ENCODE measurements at regions of chr5 and their contacts with region 1.

Region 1: GRCh38 chr5:36060420-36060887 is 6.2 kb downstream of the UGT3A2 start:
- DNase-seq: peak; percentile 55
- ATAC-seq: peak; percentile 82
- H3K4me3 ChIP-seq: peak overlapping the region; percentile 15; the same call in 1 of the 2 replicates
- H3K27ac ChIP-seq: no peak overlapping the region
- H3K4me1 ChIP-seq: peaks cover 9% of the 10 kb centered on the region
- H3K27me3 ChIP-seq: peaks cover 17% of the 10 kb centered on the region
- CTCF ChIP-seq: peak; percentile 71

Region 2: DNA sequence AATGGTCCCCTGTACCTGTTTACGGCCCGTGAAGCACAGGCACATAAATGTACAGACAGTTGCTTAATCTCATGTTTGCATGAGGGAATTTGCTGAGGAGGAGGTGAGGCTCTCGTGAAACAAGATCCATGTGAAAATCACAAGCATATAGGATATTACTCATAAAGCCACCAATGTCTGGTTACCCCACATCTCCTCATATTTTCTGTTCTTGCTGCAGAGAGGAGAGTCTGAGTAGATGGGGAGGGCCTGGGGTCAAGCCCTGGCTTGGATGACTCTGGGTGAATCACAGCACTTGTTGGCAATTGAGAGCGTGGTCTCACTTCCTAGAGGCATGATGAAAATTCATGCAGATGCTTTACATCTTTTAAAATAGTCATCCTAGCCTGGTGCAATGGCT is 1013.7 kb before region 1 on chr5:
- CTCF ChIA-PET with region 1: no interaction called
- POLR2A ChIA-PET with region 1: interaction called, 20 read pairs
- intact Hi-C with region 1: no loop called
- DNase-seq: peak; percentile 94
- ATAC-seq: peak; percentile 94
- H3K4me3 ChIP-seq: no peak overlapping the region
- H3K27ac ChIP-seq: peak overlapping the region; percentile 11; the same call in 1 of the 2 replicates
- H3K4me1 ChIP-seq: peaks cover 14% of the 10 kb centered on the region
- H3K27me3 ChIP-seq: peaks cover 43% of the 10 kb centered on the region
- CTCF ChIP-seq: no peak

Region 3: DNA sequence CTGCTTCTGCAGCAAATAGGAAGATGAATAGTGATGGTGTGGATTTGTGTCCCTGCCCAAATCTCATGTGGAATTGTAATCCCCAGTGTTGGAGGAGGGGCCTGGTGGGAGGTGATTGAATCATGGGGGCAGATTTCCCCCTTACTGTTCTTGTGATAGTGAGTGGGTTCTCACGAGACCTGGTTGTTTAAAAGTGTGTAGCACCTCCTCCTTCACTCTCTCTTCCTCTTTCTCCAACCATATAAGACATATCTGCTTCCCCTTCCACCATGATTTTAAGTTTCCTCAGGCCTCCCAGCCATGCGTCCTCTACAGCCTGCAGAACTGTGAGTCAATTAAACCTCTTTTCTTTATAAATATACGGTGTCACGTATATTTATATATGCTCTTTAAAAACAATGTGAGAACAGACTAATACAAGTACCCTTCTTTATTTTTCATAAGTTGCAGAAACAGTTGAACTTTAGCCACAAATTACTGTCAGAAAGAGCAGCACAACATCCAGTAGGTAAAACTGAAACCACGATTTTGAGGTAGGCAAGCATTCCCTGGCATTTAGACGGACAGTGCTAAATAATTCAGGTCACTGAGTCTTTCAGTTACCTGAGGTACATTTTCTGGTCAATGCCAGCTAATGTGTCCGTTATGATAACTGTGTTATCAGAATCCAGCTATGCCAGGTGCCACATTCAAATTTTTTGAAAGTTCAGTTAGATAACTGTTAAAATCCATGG is 522.1 kb before region 1 on chr5:
- CTCF ChIA-PET with region 1: no interaction called
- POLR2A ChIA-PET with region 1: no interaction called
- intact Hi-C with region 1: no loop called
- DNase-seq: no peak
- ATAC-seq: no peak
- H3K4me3 ChIP-seq: no peak overlapping the region
- H3K27ac ChIP-seq: no peak overlapping the region
- H3K4me1 ChIP-seq: no peaks in the 10 kb centered on the region
- H3K27me3 ChIP-seq: peaks cover 48% of the 10 kb centered on the region
- CTCF ChIP-seq: no peak

Region 4: DNA sequence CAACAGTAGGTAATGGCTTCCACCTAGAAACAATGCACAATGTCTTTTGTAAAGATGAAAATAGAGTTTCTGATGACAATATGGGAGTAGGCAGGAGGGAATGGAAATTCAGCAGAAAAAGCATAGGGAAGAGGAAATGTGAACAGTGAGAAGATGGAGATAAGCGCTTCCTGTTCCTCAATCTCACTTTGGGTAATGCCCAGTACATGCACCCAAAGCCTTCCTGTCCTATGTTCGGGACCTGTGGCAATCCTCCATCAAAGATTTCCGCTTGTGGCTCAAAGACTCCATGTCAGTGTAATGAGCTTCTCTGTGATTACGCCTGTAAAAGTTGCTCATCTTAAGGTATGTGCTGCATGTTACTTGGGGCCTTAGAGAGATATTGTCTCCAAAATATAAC is 71.9 kb before region 1 on chr5:
- CTCF ChIA-PET with region 1: no interaction called
- POLR2A ChIA-PET with region 1: no interaction called
- intact Hi-C with region 1: loop called (anchors 2 kb)
- DNase-seq: no peak
- ATAC-seq: no peak
- H3K4me3 ChIP-seq: no peak overlapping the region
- H3K27ac ChIP-seq: no peak overlapping the region
- H3K4me1 ChIP-seq: no peaks in the 10 kb centered on the region
- H3K27me3 ChIP-seq: peaks cover 81% of the 10 kb centered on the region
- CTCF ChIP-seq: no peak

Region 5: DNA sequence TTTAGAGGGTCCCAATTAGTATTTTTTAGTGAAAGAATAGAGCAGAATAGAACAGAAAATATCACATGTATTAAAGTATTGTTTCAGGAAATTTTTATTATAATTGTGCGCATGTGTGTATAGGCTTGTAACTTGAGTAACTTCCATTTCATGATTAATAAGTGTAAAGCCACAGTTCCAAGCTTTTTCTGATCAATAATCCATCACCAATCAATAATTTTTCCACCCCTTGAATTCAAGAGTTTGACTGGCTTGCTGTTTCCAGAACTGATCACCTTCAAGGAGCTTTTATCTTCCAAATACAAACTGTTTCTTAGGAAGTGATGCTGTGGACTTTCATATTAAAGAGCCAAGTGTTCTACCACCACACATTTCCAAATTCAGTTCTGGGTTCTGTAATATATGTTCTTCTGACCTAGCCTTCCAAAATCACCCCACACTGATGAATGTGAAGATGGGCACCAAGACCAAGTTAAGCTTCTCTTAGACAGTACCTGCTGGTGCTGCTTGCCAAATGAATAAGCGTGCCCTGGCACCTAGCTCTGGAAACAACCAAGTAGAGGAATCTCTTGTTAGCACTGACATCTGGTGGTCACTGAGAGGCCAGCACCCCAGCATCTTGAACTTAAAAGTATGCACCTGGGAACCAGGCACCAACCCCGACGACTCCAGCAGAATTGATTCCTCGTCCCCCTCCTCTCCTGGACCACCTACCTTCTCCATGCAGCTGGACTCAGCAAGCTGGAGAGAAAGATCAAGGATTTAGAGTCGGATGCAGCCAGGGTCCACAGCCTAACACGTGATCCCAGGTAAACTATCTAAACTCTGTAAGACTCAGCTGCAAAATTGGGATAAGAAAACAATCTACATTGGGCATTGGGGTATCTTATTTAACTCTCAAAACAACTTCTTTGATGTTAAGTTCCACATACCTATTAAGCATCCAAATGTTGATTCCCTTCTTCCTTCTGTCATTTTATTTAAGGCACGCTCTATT is 635.5 kb after region 1 on chr5:
- CTCF ChIA-PET with region 1: no interaction called
- POLR2A ChIA-PET with region 1: no interaction called
- intact Hi-C with region 1: loop called (anchors 5 kb)
- DNase-seq: peak; percentile 86
- ATAC-seq: peak; percentile 78
- H3K4me3 ChIP-seq: no peak overlapping the region
- H3K27ac ChIP-seq: no peak overlapping the region
- H3K4me1 ChIP-seq: no peaks in the 10 kb centered on the region
- H3K27me3 ChIP-seq: peaks cover 11% of the 10 kb centered on the region
- CTCF ChIP-seq: peak; percentile 90

Region 6: DNA sequence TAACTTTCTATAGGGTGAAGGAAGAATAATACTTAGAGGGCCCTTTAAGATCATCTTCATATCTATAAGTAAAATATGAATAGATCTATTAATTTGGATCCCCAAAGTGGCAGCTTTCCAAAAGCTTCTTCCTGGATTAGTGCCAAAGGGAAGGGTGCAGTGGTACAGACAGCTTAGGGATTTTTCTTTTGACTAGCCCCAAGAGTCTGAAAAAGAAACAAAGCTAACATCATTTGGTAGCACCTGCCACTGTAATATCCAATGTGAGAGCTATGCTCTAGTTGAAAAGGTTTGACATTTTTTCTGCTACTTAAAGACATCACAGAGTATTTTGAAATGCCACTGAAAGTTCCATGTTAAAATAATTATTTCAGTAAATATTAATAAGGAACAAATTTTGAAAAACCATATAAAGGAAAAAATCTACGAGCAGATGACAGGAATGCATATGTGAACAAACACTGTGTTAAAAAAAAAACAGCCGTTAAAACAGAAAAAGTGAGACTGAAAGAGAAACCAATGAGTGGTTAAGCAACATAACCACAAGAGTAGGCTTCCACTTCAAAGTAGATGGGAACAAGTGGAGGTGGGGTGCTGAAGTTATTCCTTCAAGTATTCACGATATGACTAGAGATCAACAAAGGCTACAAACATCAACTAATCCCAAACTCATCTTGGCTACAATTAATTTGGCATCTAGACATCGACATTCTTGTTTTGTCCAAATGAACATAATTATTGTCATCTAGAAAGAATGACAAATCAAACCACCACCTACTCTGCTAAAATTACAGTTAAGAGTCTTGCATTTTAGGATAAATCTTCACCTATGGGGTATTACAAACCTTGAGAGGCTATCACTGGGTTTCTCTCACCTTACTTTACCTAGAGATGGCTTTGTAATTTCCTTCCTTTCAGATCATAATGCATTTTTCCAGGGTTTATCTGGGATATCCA is 1051.2 kb after region 1 on chr5:
- CTCF ChIA-PET with region 1: no interaction called
- POLR2A ChIA-PET with region 1: no interaction called
- intact Hi-C with region 1: no loop called
- DNase-seq: no peak
- ATAC-seq: no peak
- H3K4me3 ChIP-seq: no peak overlapping the region
- H3K27ac ChIP-seq: no peak overlapping the region
- H3K4me1 ChIP-seq: no peaks in the 10 kb centered on the region
- H3K27me3 ChIP-seq: no peaks in the 10 kb centered on the region
- CTCF ChIP-seq: no peak

Measured in PC-3 (cell line).